HEK293T (cell line): ENCODE measurements at regions of chr11 and their contacts with region 1.

Region 1: GRCh38 chr11:121655537-121656327 is 203.0 kb upstream of the SORL1-AS1 start:
- DNase-seq: peak; percentile 85

Region 2: GRCh38 chr11:121613724-121614123 is 42.0 kb before region 1 on chr11:
- CTCF ChIA-PET with region 1: no interaction called
- POLR2A ChIA-PET with region 1: no interaction called
- DNase-seq: no peak

Region 3: GRCh38 chr11:121814962-121815361 is 159.2 kb after region 1 on chr11:
- CTCF ChIA-PET with region 1: no interaction called
- POLR2A ChIA-PET with region 1: no interaction called
- DNase-seq: no peak

Region 4: GRCh38 chr11:122505304-122506006 is 849.7 kb after region 1 on chr11:
- CTCF ChIA-PET with region 1: interaction called, 16 read pairs
- POLR2A ChIA-PET with region 1: no interaction called
- DNase-seq: peak; percentile 75